Activated naive CD8-positive, alpha-beta T cell treated with anti-CD3 and anti-CD28 coated beads, Interleukin-2, amount 10 ng/mL, durations not matched to agents 7 days and 5 days (primary cell): ENCODE measurements at regions of chr19 and their contacts with region 1.

Region 1: GRCh38 chr19:40416918-40417642 is 3.9 kb upstream of the PRX start:
- DNase-seq: no peak
- ATAC-seq: no peak
- H3K4me3 Mint-ChIP-seq: peak overlapping the region; percentile 43
- H3K27ac Mint-ChIP-seq: peak overlapping the region; percentile 83
- H3K4me1 Mint-ChIP-seq: peaks cover 34% of the 10 kb centered on the region
- H3K27me3 Mint-ChIP-seq: peaks cover 2% of the 10 kb centered on the region

Region 2: GRCh38 chr19:40403262-40403984 is 13.7 kb before region 1 on chr19:
- POLR2A ChIA-PET with region 1: interaction called, 21 read pairs
- DNase-seq: peak; percentile 89
- ATAC-seq: peak; percentile 63
- H3K4me3 Mint-ChIP-seq: peak overlapping the region; percentile 94
- H3K27ac Mint-ChIP-seq: peak overlapping the region; percentile 76
- H3K4me1 Mint-ChIP-seq: peaks cover 21% of the 10 kb centered on the region
- H3K27me3 Mint-ChIP-seq: peaks cover 16% of the 10 kb centered on the region